Esophagus squamous epithelium (tissue), 5 donors: ENCODE measurements at regions of chr13 and their contacts with region 1.

Region 1: GRCh38 chr13:49098771-49099512 is 121.2 kb upstream of the MLNR start:
- DNase-seq: no peak
- H3K4me3 ChIP-seq: no peak overlapping the region
- H3K27ac ChIP-seq: peak overlapping the region in 2 of 4 donors; percentile 71 to 75
- H3K4me1 ChIP-seq: peaks cover 6 to 28% (median 16%) of the 10 kb centered on the region in 3 donors
- H3K27me3 ChIP-seq: no peaks in the 10 kb centered on the region
- CTCF ChIP-seq: peak in 3 of 6 experiments; percentile 7 to 39 (median 32)
- POLR2A ChIP-seq: no peak

Region 2: DNA sequence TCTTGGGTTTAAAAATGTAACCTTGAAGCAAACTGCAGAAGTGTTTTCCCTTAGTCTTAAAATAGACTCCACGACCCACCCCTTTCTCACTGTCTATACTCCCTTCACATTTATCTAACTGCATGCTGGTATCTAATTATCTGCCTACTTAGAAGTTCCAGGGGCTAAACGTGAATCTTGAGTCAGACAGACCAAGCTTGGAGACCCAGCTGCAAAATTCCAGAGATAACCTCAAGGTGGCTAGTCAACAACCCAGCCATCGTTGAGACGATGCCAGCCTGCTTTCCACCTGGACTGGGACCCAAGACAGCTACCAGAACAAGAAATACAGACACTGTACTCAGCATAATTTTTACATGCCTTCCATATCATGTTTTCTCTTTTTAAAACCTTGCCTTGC is 230.9 kb after region 1 on chr13:
- intact Hi-C with region 1: no loop called
- DNase-seq: no peak
- H3K4me3 ChIP-seq: no peak overlapping the region
- H3K27ac ChIP-seq: no peak overlapping the region
- H3K4me1 ChIP-seq: no peaks in the 10 kb centered on the region
- H3K27me3 ChIP-seq: no peaks in the 10 kb centered on the region
- CTCF ChIP-seq: no peak
- POLR2A ChIP-seq: no peak

Region 3: DNA sequence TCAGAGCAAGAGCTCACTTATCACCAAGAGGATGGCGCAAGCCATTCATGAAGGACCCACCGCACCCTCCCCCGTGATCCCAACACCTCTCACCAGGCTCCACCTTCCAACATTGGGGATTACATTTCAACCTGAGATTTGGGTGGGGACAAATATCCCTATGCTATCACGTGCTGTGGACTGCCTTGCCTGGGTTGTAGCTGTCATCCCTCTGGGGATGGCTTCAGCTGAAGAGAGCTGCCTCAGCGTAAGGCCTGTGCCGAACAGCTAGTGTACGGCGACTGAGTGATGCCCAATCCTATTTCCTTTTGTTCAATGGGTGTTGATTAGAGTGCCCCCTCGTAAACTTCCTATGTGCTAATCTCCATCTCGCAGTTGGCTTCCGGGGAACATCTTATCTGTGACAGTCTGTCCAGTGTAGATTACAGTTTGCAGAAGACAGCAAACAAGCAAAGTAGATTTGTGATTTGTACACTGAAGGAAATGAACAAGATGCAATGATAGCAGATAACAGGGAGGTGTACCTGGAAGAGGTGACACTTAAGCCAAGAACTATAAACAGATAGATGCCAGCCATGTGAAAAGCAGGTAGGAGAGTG is 498.2 kb after region 1 on chr13:
- intact Hi-C with region 1: loop called (anchors 10 kb)
- DNase-seq: no peak
- H3K4me3 ChIP-seq: no peak overlapping the region
- H3K27ac ChIP-seq: no peak overlapping the region
- H3K4me1 ChIP-seq: peaks cover 0 to 2% (median 0%) of the 10 kb centered on the region in 3 donors
- H3K27me3 ChIP-seq: no peaks in the 10 kb centered on the region
- CTCF ChIP-seq: no peak
- POLR2A ChIP-seq: no peak